Panc1 (cell line): ENCODE measurements at regions of chr2 and their contacts with region 1.

Region 1: DNA sequence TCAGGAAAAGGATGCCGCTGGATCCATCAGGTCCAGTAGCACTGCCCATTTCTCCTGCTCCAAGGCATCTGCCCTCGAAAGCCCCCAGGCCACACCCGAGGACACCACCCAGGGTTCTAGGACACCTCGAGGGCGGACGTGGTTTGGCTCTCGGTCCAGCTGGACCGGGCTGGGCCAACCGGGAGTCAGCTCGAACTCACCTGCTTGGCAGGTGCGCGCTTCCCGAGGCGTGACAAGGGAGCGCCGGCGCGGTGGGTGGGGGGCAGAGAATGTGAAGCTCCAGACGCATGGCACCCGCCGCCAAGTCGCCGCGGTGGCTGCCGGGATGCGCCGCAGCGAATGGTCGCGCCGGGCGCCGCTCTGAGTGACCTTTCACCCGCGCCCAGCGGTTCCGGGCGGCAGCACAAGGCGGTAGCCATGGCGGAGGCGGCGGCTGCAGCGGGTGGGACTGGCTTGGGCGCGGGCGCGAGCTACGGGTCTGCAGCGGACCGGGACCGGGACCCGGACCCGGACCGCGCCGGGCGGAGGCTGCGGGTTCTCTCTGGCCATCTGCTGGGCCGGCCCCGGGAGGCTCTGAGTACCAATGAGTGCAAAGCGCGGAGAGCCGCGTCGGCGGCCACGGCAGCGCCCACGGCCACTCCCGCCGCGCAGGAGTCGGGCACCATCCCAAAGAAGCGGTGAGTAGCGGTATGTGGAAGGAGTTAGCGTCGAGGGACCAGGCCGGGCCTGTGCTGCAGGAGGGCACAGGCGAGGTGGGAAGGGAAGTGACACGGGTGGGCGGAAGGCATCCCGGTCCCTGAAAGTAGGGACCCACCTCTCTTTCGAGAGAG is at the start of gene AGPS:
- DNase-seq: no peak
- ATAC-seq: peak; percentile 91
- H3K4me3 ChIP-seq: peak within 1 kb of the TSS; percentile 97 to 98
- H3K27ac ChIP-seq: peak within 1 kb of the TSS; percentile 96
- H3K4me1 ChIP-seq: peaks cover 44% of the 10 kb centered on the region
- H3K27me3 ChIP-seq: no peaks in the 10 kb centered on the region
- CTCF ChIP-seq: no peak
- total RNA-seq, gene AGPS: 68.7 TPM

Region 2: GRCh38 chr2:177187631-177188312 is 204.8 kb before region 1 on chr2:
- CTCF ChIA-PET with region 1: no interaction called
- POLR2A ChIA-PET with region 1: no interaction called
- in situ Hi-C with region 1: no loop called
- intact Hi-C with region 1: no loop called
- DNase-seq: no peak
- ATAC-seq: 0 out of 2 replicates have a peak, but pooled peaks have one; percentile 51
- H3K4me3 ChIP-seq: no peak overlapping the region
- H3K27ac ChIP-seq: peak overlapping the region; percentile 62; the same call in 1 of the 2 replicates
- H3K4me1 ChIP-seq: no peaks in the 10 kb centered on the region
- H3K27me3 ChIP-seq: no peaks in the 10 kb centered on the region
- CTCF ChIP-seq: no peak

Region 3: DNA sequence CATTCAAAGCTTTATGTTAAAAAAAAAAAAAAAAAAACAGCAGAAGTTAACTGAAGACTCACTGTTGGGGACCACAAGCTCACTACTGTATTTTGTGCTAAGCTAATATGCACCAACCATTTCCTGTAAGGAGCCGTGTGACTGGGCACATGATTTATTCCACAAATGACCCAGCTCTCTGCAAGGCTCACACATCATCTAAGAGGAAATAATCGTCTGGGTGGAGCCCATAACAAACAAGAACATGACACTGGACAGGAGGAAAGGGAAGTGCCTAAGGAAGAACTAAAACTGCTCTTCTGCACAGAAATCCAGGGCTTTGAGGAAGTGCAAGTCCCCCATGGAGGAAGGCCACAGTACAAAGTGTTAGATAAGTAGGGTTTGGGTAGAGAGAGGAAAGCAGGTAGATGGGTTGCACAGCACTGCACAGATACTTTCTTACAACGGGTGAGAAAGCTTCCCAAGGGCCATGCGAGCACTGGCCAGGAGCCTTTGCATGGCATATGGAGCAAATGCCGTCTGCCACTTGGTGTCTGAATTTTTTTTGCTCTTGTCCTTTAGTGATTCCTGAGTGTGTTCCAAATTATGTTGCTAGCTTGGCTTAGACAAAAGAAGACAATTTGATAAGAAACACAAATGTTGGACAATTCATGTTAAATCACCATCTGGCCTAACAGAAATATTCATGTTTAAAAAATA is 152.5 kb before region 1 on chr2:
- CTCF ChIA-PET with region 1: no interaction called
- POLR2A ChIA-PET with region 1: no interaction called
- in situ Hi-C with region 1: no loop called
- intact Hi-C with region 1: loop called (anchors 10 kb)
- DNase-seq: peak; percentile 66
- ATAC-seq: peak; percentile 31; the same call in 1 of the 2 replicates
- H3K4me3 ChIP-seq: peak overlapping the region in 1 of 2 experiments; percentile 15; a peak in 1 of 4 replicates
- H3K27ac ChIP-seq: peak overlapping the region; percentile 94
- H3K4me1 ChIP-seq: peaks cover 90% of the 10 kb centered on the region
- H3K27me3 ChIP-seq: no peaks in the 10 kb centered on the region
- CTCF ChIP-seq: no peak